Activated naive CD4-positive, alpha-beta T cell treated with anti-CD3 and anti-CD28 coated beads for 36 hours (primary cell): ENCODE measurements at regions of chr10 and their contacts with region 1.

Region 1: DNA sequence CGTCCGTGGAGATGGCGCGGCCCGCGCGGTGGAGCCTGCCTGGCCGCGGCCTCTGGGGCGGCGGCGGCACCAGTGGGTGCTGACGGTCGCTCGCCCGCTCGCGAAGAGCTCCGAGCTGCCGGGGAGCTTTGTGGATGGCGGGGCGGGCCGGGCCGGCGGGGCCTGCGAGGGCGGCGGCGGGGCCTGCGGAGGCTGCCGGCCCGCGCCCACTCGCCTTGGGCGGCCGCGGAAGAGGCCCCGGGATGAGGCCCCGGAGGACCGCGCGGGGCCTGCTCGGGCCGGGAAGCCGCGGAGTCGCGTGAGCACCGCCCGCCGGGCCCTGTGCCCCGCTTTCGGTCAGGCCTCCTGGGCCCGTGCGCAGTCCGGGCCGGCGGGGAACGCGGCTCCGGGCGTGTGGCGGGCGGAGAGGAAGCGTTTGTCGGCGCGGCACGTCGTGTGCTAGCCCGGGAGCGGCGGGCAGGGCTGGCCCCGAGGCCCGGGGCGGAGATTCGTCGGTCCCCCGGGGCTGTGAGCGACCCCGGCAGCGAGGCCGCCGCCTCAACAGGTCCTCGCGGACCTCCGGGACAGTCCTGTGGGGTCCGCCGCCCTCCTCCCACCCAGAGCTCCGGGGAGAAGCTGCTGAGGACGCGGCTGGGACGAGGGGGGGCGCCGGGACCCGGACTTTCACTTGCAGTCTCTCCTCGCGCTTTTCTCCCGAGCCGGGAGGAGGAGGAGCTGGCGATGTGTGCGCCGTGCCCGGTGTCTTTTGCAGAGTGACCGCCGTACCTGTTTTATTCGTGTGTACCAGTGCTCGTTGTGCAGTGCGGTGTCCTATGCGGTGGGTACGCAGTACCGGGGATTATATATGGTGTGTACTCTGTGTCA is 578 bp downstream of the ZMYND11 start:
- DNase-seq: peak; percentile 72
- H3K4me3 Mint-ChIP-seq: peak overlapping the region; percentile 79
- H3K27ac Mint-ChIP-seq: peak overlapping the region; percentile 89
- H3K4me1 Mint-ChIP-seq: peaks cover 31% of the 10 kb centered on the region
- H3K27me3 Mint-ChIP-seq: no peaks in the 10 kb centered on the region

Region 2: GRCh38 chr10:1056326-1057105 is 920.7 kb after region 1 on chr10 and contains the start of gene WDR37:
- CTCF ChIA-PET with region 1: no interaction called
- intact Hi-C with region 1: loop called (anchors 5 kb)
- DNase-seq: peak; percentile 86
- H3K4me3 Mint-ChIP-seq: peak within 1 kb of the TSS; percentile 99
- H3K27ac Mint-ChIP-seq: peak within 1 kb of the TSS; percentile 90
- H3K4me1 Mint-ChIP-seq: peaks cover 79% of the 10 kb centered on the region
- H3K27me3 Mint-ChIP-seq: no peaks in the 10 kb centered on the region
- total RNA-seq, gene WDR37: 14.0 to 16.0 TPM